Calu3 (cell line): ENCODE measurements at regions of chr1 and their contacts with region 1.

Region 1: DNA sequence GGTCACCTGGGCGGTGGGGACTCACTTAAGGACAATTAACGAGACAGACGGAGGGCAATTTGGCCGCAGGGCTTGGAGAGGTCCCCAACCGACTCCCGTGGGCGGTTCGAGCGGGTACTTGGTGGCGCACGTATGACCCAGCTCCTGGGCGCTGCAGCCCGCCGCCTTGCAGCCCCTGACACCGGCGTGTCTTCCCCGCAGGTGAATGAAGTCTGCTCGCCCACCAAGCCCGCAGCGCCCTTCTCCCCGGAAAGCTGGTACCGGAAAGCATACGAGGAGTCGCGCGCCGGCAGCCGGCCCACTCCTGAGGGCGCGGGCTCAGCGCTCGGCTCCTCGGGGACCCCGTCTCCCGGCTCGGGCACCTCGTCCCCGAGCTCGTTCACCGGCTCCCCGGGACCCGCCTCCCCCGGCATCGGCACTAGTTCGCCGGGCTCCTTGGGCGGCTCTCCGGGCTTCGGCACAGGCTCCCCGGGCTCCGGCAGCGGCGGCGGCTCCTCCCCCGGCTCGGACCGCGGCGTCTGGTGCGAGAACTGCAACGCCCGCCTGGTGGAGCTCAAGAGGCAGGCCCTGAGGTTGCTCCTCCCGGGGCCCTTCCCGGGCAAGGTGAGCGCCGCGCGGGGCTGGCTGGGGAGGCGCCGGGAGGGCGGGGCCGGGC is 1.4 kb downstream of the KIF26B start:
- DNase-seq: peak; percentile 96
- H3K4me3 Mint-ChIP-seq: peak overlapping the region; percentile 73
- H3K27ac Mint-ChIP-seq: no peak overlapping the region
- H3K4me1 Mint-ChIP-seq: no peaks in the 10 kb centered on the region
- H3K27me3 Mint-ChIP-seq: peaks cover 76% of the 10 kb centered on the region
- CTCF ChIP-seq: peak; percentile 90

Region 2: DNA sequence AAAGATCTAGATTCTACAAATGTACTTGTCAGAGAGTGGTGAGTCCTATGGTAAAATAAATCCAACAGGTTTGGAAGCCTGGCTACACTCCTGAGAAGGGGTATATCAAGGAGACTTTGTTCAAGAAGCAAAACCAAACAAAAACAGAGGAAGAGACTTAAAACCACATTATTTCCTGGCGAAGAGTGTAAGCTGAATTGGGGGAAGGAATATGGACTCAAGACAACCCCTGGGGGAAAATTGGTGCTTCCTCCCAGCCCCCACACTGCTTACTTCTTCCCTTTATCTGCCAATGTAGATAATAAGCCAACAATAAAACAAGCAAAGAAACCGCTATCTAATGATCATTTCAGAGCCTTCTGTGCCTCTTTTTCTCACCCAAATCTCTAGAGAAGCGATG is 1153.5 kb before region 1 on chr1:
- CTCF ChIA-PET with region 1: no interaction called
- intact Hi-C with region 1: no loop called
- DNase-seq: no peak
- H3K4me3 Mint-ChIP-seq: no peak overlapping the region
- H3K27ac Mint-ChIP-seq: no peak overlapping the region
- H3K4me1 Mint-ChIP-seq: no peaks in the 10 kb centered on the region
- H3K27me3 Mint-ChIP-seq: peaks cover 40% of the 10 kb centered on the region
- CTCF ChIP-seq: no peak

Region 3: GRCh38 chr1:245079021-245079609 is 77.1 kb before region 1 on chr1:
- CTCF ChIA-PET with region 1: no interaction called
- intact Hi-C with region 1: loop called (anchors 2 kb)
- DNase-seq: peak; percentile 28
- H3K4me3 Mint-ChIP-seq: no peak overlapping the region
- H3K27ac Mint-ChIP-seq: no peak overlapping the region
- H3K4me1 Mint-ChIP-seq: no peaks in the 10 kb centered on the region
- H3K27me3 Mint-ChIP-seq: no peaks in the 10 kb centered on the region
- CTCF ChIP-seq: peak; percentile 65

Region 4: DNA sequence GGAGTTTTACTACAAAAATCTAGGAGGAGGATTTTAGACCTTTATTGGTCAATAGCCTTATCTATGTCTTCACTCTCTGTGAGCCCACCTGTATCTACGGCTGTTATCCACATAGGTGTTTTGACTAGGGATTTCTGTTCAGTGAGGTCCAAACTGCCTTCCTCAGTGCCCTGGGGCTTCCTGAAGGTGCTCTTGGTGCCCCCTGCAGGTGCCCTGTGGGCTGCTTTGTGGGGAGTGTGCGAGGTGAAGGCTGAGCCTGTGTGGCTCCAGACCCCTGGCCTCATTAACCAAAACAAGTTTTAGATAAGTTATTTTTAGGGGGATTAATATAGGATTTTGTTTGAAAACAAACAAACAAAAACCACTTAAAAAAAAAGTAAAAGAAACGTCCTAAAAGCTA is 121.1 kb after region 1 on chr1:
- CTCF ChIA-PET with region 1: interaction called, 6 read pairs
- intact Hi-C with region 1: loop called (anchors 1 kb)
- DNase-seq: peak; percentile 59
- H3K4me3 Mint-ChIP-seq: no peak overlapping the region
- H3K27ac Mint-ChIP-seq: no peak overlapping the region
- H3K4me1 Mint-ChIP-seq: no peaks in the 10 kb centered on the region
- H3K27me3 Mint-ChIP-seq: no peaks in the 10 kb centered on the region
- CTCF ChIP-seq: peak; percentile 35

Region 5: GRCh38 chr1:245485996-245486395 is 329.8 kb after region 1 on chr1:
- CTCF ChIA-PET with region 1: no interaction called
- intact Hi-C with region 1: loop called (anchors 10 kb)
- DNase-seq: no peak
- H3K4me3 Mint-ChIP-seq: no peak overlapping the region
- H3K27ac Mint-ChIP-seq: no peak overlapping the region
- H3K4me1 Mint-ChIP-seq: peaks cover 13% of the 10 kb centered on the region
- H3K27me3 Mint-ChIP-seq: no peaks in the 10 kb centered on the region
- CTCF ChIP-seq: no peak

Region 6: DNA sequence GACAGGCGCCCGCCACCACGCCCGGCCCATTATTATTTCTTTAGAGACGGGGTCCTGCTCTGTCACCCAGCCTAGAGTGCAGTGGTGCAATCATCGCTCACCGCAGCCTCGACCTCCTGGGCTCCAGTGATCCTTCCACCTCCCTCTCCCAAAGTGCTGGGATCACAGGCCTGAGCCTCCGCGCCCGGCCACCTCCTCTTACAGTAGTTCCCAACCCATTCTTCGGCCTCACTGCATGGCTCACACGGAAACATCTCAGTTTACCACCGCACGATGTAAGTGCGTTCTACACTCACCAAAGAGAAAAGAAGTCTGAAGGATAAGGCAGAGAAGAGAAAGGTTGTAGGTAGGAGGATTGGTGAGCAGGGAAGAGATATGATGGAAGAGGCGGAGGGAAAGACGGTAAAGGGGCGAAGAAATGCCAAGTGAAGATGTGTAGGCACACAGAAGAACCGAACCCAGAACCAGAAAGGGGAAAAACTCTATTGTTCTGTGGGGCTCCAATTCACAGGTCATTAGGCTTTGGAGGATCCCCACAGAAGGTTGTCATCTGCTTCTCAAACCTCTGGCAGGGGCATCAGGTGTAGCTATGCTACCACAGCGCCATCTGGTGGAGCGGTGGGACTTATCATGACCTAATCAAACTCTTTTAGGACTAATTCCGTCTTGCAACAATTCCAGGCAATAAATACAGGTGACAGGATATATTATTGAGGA is 846.7 kb after region 1 on chr1:
- CTCF ChIA-PET with region 1: interaction called, 15 read pairs
- intact Hi-C with region 1: loop called (anchors 1 kb)
- DNase-seq: peak; percentile 89
- H3K4me3 Mint-ChIP-seq: no peak overlapping the region
- H3K27ac Mint-ChIP-seq: no peak overlapping the region
- H3K4me1 Mint-ChIP-seq: peaks cover 19% of the 10 kb centered on the region
- H3K27me3 Mint-ChIP-seq: no peaks in the 10 kb centered on the region
- CTCF ChIP-seq: peak; percentile 89

Region 7: DNA sequence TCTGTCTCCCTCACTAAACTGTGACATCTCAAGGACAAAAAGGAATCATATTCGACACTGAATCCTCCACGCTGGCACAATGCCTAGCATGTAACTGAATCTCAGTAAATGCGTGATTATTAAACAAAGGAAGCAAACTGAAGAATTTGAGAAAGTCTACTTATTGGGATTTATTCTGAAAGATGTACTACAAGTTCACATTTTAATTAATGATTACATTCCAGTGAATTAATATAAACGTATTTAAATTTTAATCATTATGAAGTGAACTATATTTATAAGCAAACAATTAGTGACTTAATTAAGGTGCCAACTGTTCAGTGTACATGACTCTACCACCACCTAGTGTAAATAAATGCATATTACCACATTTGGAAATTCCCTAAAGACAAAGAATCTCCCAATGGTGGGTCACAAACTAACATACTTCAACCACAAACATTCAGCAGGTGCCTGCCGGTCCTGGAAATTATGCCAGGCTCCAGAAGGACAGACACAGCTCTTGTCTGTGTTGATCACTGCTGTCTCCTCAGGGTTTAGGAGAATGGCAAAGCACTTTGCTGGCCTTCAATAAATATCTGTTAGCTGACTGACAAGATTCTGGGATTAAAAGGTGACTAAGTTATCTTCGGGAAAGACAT is 1294.5 kb after region 1 on chr1:
- CTCF ChIA-PET with region 1: no interaction called
- intact Hi-C with region 1: loop called (anchors 1 kb)
- DNase-seq: no peak
- H3K4me3 Mint-ChIP-seq: no peak overlapping the region
- H3K27ac Mint-ChIP-seq: no peak overlapping the region
- H3K4me1 Mint-ChIP-seq: peaks cover 20% of the 10 kb centered on the region
- H3K27me3 Mint-ChIP-seq: no peaks in the 10 kb centered on the region
- CTCF ChIP-seq: peak; percentile 64